Endothelial cell of umbilical vein (primary cell): ENCODE measurements at regions of chr14 and their contacts with region 1.

Region 1: DNA sequence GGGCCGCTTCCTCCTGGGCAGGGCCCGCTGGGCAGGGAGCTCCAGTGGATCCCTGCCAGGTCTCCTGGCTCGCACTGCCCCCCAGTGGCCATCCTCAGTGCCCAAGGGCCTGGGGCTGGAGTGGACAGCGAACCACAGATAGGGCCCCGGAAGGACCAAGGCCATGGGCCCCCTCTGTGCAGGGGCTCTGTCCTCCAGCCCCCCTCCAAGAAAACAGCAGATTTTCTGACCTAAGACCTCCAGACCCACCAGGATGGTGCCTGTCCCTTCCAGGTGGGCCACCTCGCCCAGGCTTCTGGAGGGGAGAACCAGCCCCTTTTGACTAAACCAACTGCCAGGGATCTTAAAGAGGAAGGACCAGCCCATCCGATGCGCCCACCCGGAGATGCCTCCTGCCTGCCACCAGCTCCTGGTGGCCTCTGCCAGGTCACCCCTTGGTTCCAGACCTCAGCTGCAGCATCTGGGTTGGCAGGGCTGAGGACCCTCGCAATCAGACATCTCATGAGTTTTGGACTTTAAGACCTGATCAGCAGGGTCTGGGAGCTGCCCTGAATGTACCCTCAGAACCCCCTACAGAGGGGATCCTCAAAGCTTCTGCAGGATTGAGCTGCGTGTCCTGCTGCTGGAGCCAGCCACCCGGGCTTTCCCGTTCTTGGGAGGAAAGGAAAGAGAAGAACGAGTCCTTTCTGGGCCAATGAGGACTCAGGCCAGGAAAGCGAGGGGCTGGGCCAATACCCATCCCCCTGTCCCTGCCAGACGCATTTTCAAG is 325.8 kb upstream of the DIO3 start:
- DNase-seq: peak; percentile 55
- H3K4me3 ChIP-seq: no peak overlapping the region
- H3K27ac ChIP-seq: no peak overlapping the region
- H3K4me1 ChIP-seq: no peaks in the 10 kb centered on the region
- H3K27me3 ChIP-seq: no peaks in the 10 kb centered on the region
- CTCF ChIP-seq: peak; percentile 79 to 95
- POLR2A ChIP-seq: no peak

Region 2: GRCh38 chr14:100417466-100417865 is 818.1 kb before region 1 on chr14:
- CTCF ChIA-PET with region 1: interaction called, 10 read pairs
- POLR2A ChIA-PET with region 1: no interaction called
- dilution Hi-C with region 1: no loop called
- intact Hi-C with region 1: no loop called
- DNase-seq: peak; percentile 88
- H3K4me3 ChIP-seq: no peak overlapping the region
- H3K27ac ChIP-seq: no peak overlapping the region
- H3K4me1 ChIP-seq: no peaks in the 10 kb centered on the region
- H3K27me3 ChIP-seq: no peaks in the 10 kb centered on the region
- CTCF ChIP-seq: peak; percentile 72 to 82
- POLR2A ChIP-seq: no peak

Region 3: DNA sequence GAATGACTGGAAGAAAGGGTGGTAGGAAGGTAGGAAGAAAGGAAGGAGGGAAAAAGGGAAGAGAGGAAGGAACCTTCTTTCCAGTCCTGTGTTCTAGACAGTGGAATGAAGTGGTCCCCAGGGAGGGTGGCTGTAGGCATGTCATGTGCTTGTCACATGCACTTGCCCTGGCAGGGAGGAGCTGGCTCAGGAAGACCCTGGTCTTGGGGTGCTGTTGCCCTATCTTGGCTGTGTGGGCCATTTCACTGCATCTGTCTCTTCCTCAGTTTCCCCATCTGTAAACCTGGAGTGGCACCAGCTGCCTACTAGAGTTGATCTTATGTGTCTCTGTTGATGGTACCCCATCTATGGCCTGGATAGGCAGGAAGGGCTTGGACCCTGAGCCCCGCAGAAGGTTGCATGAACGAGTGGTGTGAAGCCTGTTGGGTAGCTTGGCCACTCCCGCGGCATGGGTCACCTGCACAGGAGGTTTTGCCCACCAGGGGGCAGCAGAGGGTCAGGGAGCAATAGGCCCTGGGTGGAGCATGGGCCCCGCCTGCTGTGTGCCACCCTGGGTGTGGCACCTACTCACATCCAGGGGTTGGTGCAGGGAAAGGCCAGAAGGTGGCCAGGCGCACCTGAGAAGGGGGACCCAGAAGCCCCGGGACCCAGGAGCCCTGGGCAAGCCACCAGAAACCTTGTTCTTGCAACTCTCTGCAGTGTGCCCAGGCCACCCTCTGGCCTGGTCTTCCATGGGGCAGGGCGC is 384.5 kb before region 1 on chr14:
- CTCF ChIA-PET with region 1: interaction called, 46 read pairs
- POLR2A ChIA-PET with region 1: no interaction called
- dilution Hi-C with region 1: no loop called
- intact Hi-C with region 1: loop called (anchors 1 kb)
- DNase-seq: peak; percentile 32
- H3K4me3 ChIP-seq: no peak overlapping the region
- H3K27ac ChIP-seq: no peak overlapping the region
- H3K4me1 ChIP-seq: no peaks in the 10 kb centered on the region
- H3K27me3 ChIP-seq: no peaks in the 10 kb centered on the region
- CTCF ChIP-seq: peak; percentile 71 to 85
- POLR2A ChIP-seq: no peak

Region 4: DNA sequence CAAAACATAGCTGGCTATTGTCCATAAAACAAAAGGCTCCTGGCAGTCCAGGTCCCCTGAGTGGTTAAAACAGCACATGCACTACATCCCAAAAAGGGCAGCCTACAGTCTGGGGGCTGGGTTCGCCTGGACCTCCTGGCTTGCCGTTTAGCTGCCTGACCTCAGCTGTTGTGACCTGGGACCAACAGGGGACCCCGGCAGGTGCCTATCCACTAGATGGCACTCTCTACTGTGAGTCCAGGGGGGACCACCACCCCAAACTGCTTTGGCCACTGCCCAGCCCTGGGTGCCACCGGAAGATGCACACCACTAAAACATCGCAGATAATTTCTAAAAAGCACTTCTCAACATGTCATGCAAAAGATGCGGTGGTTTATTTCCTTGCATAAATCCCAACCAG is 329.1 kb before region 1 on chr14:
- CTCF ChIA-PET with region 1: interaction called, 41 read pairs
- POLR2A ChIA-PET with region 1: no interaction called
- dilution Hi-C with region 1: no loop called
- intact Hi-C with region 1: loop called (anchors 1 kb)
- DNase-seq: no peak
- H3K4me3 ChIP-seq: no peak overlapping the region
- H3K27ac ChIP-seq: no peak overlapping the region
- H3K4me1 ChIP-seq: no peaks in the 10 kb centered on the region
- H3K27me3 ChIP-seq: peaks cover 0 to 3% of the 10 kb centered on the region in 2 experiments
- CTCF ChIP-seq: peak; percentile 23 to 28
- POLR2A ChIP-seq: no peak

Region 5: GRCh38 chr14:101628471-101628966 is 393.0 kb after region 1 on chr14:
- CTCF ChIA-PET with region 1: no interaction called
- POLR2A ChIA-PET with region 1: no interaction called
- dilution Hi-C with region 1: no loop called
- intact Hi-C with region 1: loop called (anchors 2 kb)
- DNase-seq: peak; percentile 59
- H3K4me3 ChIP-seq: no peak overlapping the region
- H3K27ac ChIP-seq: no peak overlapping the region
- H3K4me1 ChIP-seq: peaks cover 2% of the 10 kb centered on the region
- H3K27me3 ChIP-seq: no peaks in the 10 kb centered on the region
- CTCF ChIP-seq: peak; percentile 93 to 95
- POLR2A ChIP-seq: no peak